ENCODE measurements at regions of chr21 and their contacts with region 1.

Region 1: DNA sequence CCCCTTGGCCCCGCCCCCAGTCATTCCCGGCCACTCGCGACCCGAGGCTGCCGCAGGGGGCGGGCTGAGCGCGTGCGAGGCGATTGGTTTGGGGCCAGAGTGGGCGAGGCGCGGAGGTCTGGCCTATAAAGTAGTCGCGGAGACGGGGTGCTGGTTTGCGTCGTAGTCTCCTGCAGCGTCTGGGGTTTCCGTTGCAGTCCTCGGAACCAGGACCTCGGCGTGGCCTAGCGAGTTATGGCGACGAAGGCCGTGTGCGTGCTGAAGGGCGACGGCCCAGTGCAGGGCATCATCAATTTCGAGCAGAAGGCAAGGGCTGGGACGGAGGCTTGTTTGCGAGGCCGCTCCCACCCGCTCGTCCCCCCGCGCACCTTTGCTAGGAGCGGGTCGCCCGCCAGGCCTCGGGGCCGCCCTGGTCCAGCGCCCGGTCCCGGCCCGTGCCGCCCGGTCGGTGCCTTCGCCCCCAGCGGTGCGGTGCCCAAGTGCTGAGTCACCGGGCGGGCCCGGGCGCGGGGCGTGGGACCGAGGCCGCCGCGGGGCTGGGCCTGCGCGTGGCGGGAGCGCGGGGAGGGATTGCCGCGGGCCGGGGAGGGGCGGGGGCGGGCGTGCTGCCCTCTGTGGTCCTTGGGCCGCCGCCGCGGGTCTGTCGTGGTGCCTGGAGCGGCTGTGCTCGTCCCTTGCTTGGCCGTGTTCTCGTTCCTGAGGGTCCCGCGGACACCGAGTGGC is at the start of gene SOD1:
- DNase-seq: peak; percentile 96
- H3K4me3 ChIP-seq: peak within 1 kb of the TSS; percentile 78 to 92 (median 86)
- H3K27ac ChIP-seq: peak within 1 kb of the TSS; percentile 90 to 97 (median 95)
- H3K4me1 ChIP-seq: peaks cover 7 to 53% (median 30%) of the 10 kb centered on the region in 4 donors
- H3K27me3 ChIP-seq: no peaks in the 10 kb centered on the region
- CTCF ChIP-seq: peak in 4 of 5 experiments; percentile 11 to 25 (median 23)
- EP300 ChIP-seq: no peak
- POLR2A ChIP-seq: peak; percentile 92
- total RNA-seq, gene SOD1: 117 to 312 (median 256) TPM

Region 2: GRCh38 chr21:31713973-31714740 is 54.5 kb after region 1 on chr21:
- in situ Hi-C with region 1: no loop called
- intact Hi-C with region 1: no loop called
- DNase-seq: no peak
- H3K4me3 ChIP-seq: no peak overlapping the region
- H3K27ac ChIP-seq: no peak overlapping the region
- H3K4me1 ChIP-seq: peaks cover 0 to 41% (median 5%) of the 10 kb centered on the region in 4 donors
- H3K27me3 ChIP-seq: no peaks in the 10 kb centered on the region
- CTCF ChIP-seq: no peak
- EP300 ChIP-seq: no peak
- POLR2A ChIP-seq: no peak

Region 3: GRCh38 chr21:31735511-31735992 is 75.9 kb after region 1 on chr21:
- in situ Hi-C with region 1: no loop called
- intact Hi-C with region 1: loop called (anchors 5 kb)
- DNase-seq: no peak
- H3K4me3 ChIP-seq: no peak overlapping the region
- H3K27ac ChIP-seq: no peak overlapping the region
- H3K4me1 ChIP-seq: peaks cover 8 to 16% (median 13%) of the 10 kb centered on the region in 4 donors
- H3K27me3 ChIP-seq: no peaks in the 10 kb centered on the region
- CTCF ChIP-seq: no peak
- EP300 ChIP-seq: no peak
- POLR2A ChIP-seq: no peak

Region 4: GRCh38 chr21:31873696-31874599 is 214.3 kb after region 1 on chr21:
- in situ Hi-C with region 1: no loop called
- intact Hi-C with region 1: no loop called
- DNase-seq: peak; percentile 68
- H3K4me3 ChIP-seq: peak overlapping the region; percentile 51 to 82 (median 72)
- H3K27ac ChIP-seq: peak overlapping the region; percentile 80 to 88 (median 84)
- H3K4me1 ChIP-seq: peaks cover 4 to 35% (median 15%) of the 10 kb centered on the region in 4 donors
- H3K27me3 ChIP-seq: peaks cover 24% of the 10 kb centered on the region
- CTCF ChIP-seq: peak; percentile 50 to 81 (median 72)
- EP300 ChIP-seq: no peak
- POLR2A ChIP-seq: no peak